ENCODE measurements at regions of chr10 and their contacts with region 1.

Region 1: DNA sequence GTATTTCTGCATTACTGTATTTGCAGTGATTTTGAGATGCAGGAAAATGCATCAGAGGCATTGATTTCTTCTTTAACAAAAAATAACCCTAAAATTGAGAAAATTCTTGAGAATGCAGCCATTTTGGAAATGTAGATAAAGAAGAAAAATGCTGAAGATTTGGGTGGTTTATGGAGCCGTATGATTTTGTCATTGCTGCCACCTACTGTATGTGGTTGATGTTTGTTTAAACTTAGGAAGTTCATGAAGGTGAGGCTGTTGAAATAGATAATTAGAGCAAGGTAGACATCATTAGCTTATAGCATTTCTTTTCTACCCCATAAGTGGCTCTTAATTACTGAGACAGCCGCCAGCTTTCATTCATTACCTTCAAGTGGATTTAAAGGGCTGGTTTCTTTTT is 92.1 kb upstream of the SAMD8 start:
- DNase-seq: no peak
- ATAC-seq: peak; percentile 34
- H3K4me3 Mint-ChIP-seq: no peak overlapping the region
- H3K27ac Mint-ChIP-seq: no peak overlapping the region
- H3K4me1 Mint-ChIP-seq: peaks cover 31% of the 10 kb centered on the region
- H3K27me3 Mint-ChIP-seq: no peaks in the 10 kb centered on the region

Region 2: GRCh38 chr10:74262856-74263255 is 756.5 kb before region 1 on chr10:
- CTCF ChIA-PET with region 1: no interaction called
- POLR2A ChIA-PET with region 1: no interaction called
- intact Hi-C with region 1: loop called (anchors 1 kb)
- DNase-seq: no peak
- ATAC-seq: no peak
- H3K4me3 Mint-ChIP-seq: no peak overlapping the region
- H3K27ac Mint-ChIP-seq: no peak overlapping the region
- H3K4me1 Mint-ChIP-seq: peaks cover 17% of the 10 kb centered on the region
- H3K27me3 Mint-ChIP-seq: no peaks in the 10 kb centered on the region

Region 3: GRCh38 chr10:74502963-74503608 is 516.3 kb before region 1 on chr10:
- CTCF ChIA-PET with region 1: interaction called, 3 read pairs
- POLR2A ChIA-PET with region 1: no interaction called
- intact Hi-C with region 1: loop called (anchors 5 to 10 kb)
- DNase-seq: no peak
- ATAC-seq: peak; percentile 63
- H3K4me3 Mint-ChIP-seq: peak overlapping the region; percentile 6
- H3K27ac Mint-ChIP-seq: peak overlapping the region; percentile 81
- H3K4me1 Mint-ChIP-seq: peaks cover 47% of the 10 kb centered on the region
- H3K27me3 Mint-ChIP-seq: no peaks in the 10 kb centered on the region

Region 4: GRCh38 chr10:75035975-75036708 is 16.8 kb after region 1 on chr10:
- CTCF ChIA-PET with region 1: interaction called, 10 read pairs
- POLR2A ChIA-PET with region 1: no interaction called
- intact Hi-C with region 1: no loop called
- DNase-seq: peak; percentile 55
- ATAC-seq: peak; percentile 43
- H3K4me3 Mint-ChIP-seq: no peak overlapping the region
- H3K27ac Mint-ChIP-seq: peak overlapping the region; percentile 82
- H3K4me1 Mint-ChIP-seq: peaks cover 64% of the 10 kb centered on the region
- H3K27me3 Mint-ChIP-seq: no peaks in the 10 kb centered on the region